ENCODE measurements at regions of chr15 and their contacts with region 1.

Region 1: GRCh38 chr15:60507596-60508424 is 28.9 kb upstream of the ICE2 start:
- DNase-seq: peak; percentile 43
- H3K4me3 Mint-ChIP-seq: no peak overlapping the region
- H3K27ac Mint-ChIP-seq: peak overlapping the region; percentile 11
- H3K4me1 Mint-ChIP-seq: peaks cover 29% of the 10 kb centered on the region
- H3K27me3 Mint-ChIP-seq: no peaks in the 10 kb centered on the region

Region 2: DNA sequence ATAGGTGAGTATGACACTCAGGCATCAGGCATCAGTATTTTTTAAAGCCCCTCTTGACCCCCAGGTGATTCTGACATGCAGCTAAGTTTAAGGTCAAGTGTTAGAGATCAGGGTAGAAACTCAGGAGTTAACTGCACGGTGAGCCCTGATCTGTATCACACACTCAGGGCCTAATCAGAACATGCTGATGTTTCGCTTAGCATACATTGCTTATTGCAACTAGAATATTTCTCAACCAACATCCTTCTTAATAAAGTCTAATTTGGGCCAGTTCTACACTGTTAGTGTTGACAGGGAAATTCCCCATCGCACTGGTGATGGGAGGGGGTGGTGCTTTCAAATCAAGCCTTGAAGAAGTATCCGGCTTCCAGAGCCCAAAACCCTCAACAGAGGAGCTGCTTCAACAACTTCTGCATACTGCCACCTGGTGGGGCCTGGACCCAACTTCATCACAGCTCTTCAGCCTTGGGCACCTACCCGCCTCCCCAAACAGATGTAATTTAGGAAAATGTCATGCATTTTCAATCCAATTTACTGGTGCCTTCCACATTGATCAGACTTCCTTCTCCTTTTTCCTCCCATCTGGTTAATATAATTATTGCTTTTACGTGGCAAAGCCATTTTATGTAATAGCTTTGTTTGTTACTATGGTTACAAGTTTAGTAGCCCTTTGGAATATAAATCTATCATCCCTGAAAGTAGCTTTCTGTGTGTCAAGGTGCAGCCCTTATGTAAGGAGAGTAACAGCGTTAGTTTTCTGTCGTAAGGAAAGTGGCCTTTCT is 409.1 kb after region 1 on chr15:
- intact Hi-C with region 1: loop called (anchors 5 kb)
- DNase-seq: peak; percentile 69
- H3K4me3 Mint-ChIP-seq: no peak overlapping the region
- H3K27ac Mint-ChIP-seq: no peak overlapping the region
- H3K4me1 Mint-ChIP-seq: peaks cover 16% of the 10 kb centered on the region
- H3K27me3 Mint-ChIP-seq: peaks cover 27% of the 10 kb centered on the region